Cardiac septum (tissue), 1 donor: ENCODE measurements at regions of chr3 and their contacts with region 1.

Region 1: GRCh38 chr3:129224984-129225393 is 24.4 kb upstream of the COPG1 start:
- DNase-seq: peak; percentile 89

Region 2: DNA sequence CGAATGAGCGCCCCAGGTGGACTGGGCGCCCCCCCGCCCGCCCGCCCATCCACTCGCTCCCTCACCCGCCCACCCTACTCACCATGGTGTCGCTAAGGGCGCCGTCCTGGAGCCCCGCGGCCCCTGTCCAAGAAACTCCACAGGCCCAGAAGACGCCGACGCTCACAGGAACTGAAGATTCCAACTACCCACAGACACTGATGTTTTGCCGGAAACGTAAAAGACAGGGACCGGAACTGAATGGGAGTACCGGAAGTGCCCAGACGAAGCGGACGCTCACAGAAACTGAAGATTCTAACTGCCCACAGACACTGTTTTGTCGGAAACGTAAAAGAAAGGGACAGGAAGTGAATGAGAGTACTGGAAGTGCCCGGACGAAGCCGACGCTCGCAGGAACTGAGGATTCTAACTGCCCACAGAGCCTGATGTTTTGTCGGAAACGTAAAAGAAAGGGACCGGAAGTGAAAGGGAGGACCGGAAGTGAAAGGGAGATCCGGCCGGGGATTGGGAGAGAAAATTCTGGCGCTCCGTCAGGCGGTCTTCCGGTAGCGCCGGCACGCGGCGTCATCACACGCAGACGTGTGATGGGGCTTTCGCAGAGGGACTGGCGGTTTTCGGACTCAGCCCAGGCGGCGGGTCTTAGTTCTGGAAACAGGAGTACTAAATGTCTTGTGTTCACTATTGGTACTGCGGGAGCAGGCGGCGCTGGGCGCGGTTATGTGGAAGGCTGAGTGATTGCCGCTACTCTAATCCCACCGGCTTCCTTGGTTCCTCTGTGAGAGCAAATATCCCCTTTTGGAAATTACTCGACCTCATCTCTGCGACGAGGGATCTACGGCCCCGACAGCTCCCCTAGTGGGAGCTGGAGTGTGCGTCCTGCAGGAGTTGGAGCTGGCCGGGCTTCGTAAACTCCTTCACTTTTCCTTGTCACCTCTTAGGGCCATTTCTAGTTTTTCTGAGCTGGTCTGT is 63.8 kb before region 1 on chr3 and contains the start of gene ISY1:
- intact Hi-C with region 1: loop called (anchors 1 kb)
- DNase-seq: peak; percentile 94
- total RNA-seq, gene ISY1: 23.9 TPM

Region 3: DNA sequence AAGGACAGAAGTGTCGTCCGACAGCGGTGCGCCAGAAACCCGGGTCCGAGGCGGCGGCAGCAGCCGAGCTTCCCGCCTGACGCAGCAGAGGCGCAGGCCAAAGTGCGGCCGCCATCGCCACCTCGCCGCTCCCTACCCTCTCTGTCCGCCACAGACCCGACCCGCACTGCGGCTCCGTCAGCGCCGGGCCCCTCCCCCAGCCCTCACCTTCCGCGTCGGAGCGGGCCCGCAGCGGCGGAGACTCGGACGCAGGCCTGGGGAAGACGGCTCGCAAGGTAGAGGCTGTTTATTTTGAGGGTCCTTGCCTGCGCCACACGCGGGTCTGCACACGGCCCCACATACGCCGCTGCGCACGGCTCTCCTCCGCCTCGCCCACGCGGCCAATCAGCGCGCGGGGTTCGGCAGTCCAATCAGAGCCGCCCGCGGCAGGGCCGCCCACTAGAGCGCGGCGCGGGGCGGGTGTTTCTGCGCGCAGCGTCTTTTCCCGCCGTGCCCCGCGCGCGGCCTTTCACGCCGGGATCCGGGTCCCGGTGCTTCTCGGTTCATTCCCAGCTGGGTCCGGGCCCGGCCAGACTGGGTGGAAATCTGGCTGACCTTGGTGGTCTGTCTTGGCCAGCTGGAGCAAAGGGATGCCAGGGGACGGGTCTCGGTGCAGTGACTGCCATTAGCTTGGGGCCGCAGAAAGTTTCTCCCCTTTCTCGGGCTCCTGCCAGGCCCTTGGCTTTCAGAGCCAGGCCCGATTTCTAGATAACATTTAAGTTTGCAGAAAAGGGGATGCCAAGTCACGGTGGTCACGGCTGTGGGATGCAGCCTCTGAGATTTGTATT is 41.2 kb before region 1 on chr3 and contains the start of gene CNBP:
- intact Hi-C with region 1: loop called (anchors 5 kb)
- DNase-seq: peak; percentile 96
- total RNA-seq, gene CNBP: 458 TPM

Region 4: GRCh38 chr3:129195731-129196256 is 29.2 kb before region 1 on chr3:
- intact Hi-C with region 1: loop called (anchors 1 kb)
- DNase-seq: peak; percentile 79

Region 5: GRCh38 chr3:129627429-129628168 is 402.6 kb after region 1 on chr3:
- intact Hi-C with region 1: no loop called
- DNase-seq: no peak